CD8-positive, alpha-beta T cell (primary cell): ENCODE measurements at regions of chr7 and their contacts with region 1.

Region 1: GRCh38 chr7:138981332-138982203 is at the start of gene KIAA1549:
- DNase-seq: peak in 8 of 9 experiments; percentile 24 to 72 (median 48)
- ATAC-seq: peak; percentile 66
- H3K4me3 ChIP-seq: peak within 1 kb of the TSS; percentile 42 to 48
- H3K4me3 Mint-ChIP-seq: peak within 1 kb of the TSS; percentile 89
- H3K27ac ChIP-seq: no peak within 1 kb of the TSS
- H3K27ac Mint-ChIP-seq: no peak within 1 kb of the TSS
- H3K4me1 ChIP-seq: peaks cover 9% of the 10 kb centered on the region
- H3K4me1 Mint-ChIP-seq: peaks cover 12% of the 10 kb centered on the region
- H3K27me3 ChIP-seq: peaks cover 10 to 13% of the 10 kb centered on the region in 2 experiments
- H3K27me3 Mint-ChIP-seq: peaks cover 33% of the 10 kb centered on the region
- CTCF ChIP-seq: no peak
- total RNA-seq, gene KIAA1549: 0.06 TPM in 1 of 2 experiments, not detected in the other

Region 2: DNA sequence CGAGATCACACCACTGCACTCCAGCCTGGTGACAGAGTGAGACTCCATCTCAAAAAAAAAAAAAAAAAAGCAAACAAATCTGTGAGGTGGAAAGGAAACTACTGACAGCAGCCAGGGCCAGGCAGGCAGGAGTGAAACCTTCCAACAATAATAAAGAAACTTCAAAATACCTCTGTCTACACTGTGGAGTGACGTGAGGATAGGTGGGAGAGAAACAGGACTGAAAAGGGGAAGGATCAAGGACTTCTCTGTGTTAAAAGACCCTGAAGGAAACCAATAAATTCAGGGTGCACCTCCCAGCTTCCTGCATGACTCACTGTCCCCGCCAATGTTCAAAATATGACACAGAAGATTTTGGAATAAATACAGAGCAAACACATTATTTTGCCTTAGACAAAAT is 83.3 kb before region 1 on chr7:
- CTCF ChIA-PET with region 1: interaction called, 4 read pairs
- POLR2A ChIA-PET with region 1: no interaction called
- intact Hi-C with region 1: loop called in 1 of 2 experiments (anchors 5 kb)
- DNase-seq: peak in 6 of 9 experiments; percentile 10 to 52 (median 36)
- ATAC-seq: peak; percentile 73
- H3K4me3 ChIP-seq: no peak overlapping the region
- H3K4me3 Mint-ChIP-seq: no peak overlapping the region
- H3K27ac ChIP-seq: no peak overlapping the region
- H3K27ac Mint-ChIP-seq: no peak overlapping the region
- H3K4me1 ChIP-seq: peaks cover 26% of the 10 kb centered on the region
- H3K4me1 Mint-ChIP-seq: peaks cover 42% of the 10 kb centered on the region
- H3K27me3 ChIP-seq: peaks cover 0 to 2% of the 10 kb centered on the region in 2 experiments
- H3K27me3 Mint-ChIP-seq: peaks cover 32% of the 10 kb centered on the region
- CTCF ChIP-seq: no peak